ENCODE measurements at regions of chr19 and their contacts with region 1.

Region 1: DNA sequence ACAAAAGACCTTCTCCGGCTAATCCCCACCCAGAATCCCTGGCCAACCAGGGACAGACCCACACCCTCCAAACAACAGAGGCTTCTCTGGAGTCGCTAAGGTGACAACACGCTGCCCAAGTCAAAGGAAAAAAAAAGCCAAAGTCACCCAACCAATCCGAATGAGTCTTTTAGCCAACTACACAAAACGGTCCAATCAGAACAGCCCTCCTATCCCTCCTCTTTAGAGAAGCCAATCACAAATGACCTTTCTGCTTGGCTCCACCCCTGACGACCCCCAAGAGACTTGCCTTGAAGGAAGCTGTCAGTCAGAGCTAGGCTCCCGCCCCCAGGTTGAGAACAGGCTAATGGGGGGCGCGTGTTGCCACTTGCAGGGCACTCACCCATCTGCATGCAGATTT is 6.6 kb upstream of the FBXW9 start:
- DNase-seq: peak; percentile 9
- H3K4me3 ChIP-seq: no peak overlapping the region
- H3K27ac ChIP-seq: no peak overlapping the region
- H3K4me1 ChIP-seq: no peaks in the 10 kb centered on the region
- H3K27me3 ChIP-seq: no peaks in the 10 kb centered on the region
- CTCF ChIP-seq: no peak

Region 2: GRCh38 chr19:12766051-12766521 is 63.0 kb after region 1 on chr19:
- CTCF ChIA-PET with region 1: no interaction called
- dilution Hi-C with region 1: loop called (anchors 5 kb)
- in situ Hi-C with region 1: no loop called
- intact Hi-C with region 1: no loop called
- DNase-seq: peak; percentile 76
- H3K4me3 ChIP-seq: peak overlapping the region in 2 of 3 experiments; percentile 40 to 46
- H3K27ac ChIP-seq: no peak overlapping the region
- H3K4me1 ChIP-seq: no peaks in the 10 kb centered on the region
- H3K27me3 ChIP-seq: no peaks in the 10 kb centered on the region
- CTCF ChIP-seq: peak; percentile 29 to 67